ENCODE measurements at regions of chr11 and their contacts with region 1.

Region 1: GRCh38 chr11:96464700-96465307 is 75.0 kb downstream of the JRKL start:
- DNase-seq: peak; percentile 64
- H3K4me3 ChIP-seq: no peak overlapping the region
- H3K27ac ChIP-seq: no peak overlapping the region
- H3K4me1 ChIP-seq: peaks cover 3% of the 10 kb centered on the region
- H3K27me3 ChIP-seq: no peaks in the 10 kb centered on the region
- CTCF ChIP-seq: peak; percentile 45 to 52
- POLR2A ChIP-seq: no peak

Region 2: GRCh38 chr11:96481771-96482170 is 17.0 kb after region 1 on chr11:
- CTCF ChIA-PET with region 1: interaction called, 23 read pairs
- POLR2A ChIA-PET with region 1: no interaction called
- dilution Hi-C with region 1: no loop called
- intact Hi-C with region 1: no loop called
- DNase-seq: no peak
- H3K4me3 ChIP-seq: no peak overlapping the region
- H3K27ac ChIP-seq: no peak overlapping the region
- H3K4me1 ChIP-seq: no peaks in the 10 kb centered on the region
- H3K27me3 ChIP-seq: no peaks in the 10 kb centered on the region
- CTCF ChIP-seq: no peak
- POLR2A ChIP-seq: no peak

Region 3: DNA sequence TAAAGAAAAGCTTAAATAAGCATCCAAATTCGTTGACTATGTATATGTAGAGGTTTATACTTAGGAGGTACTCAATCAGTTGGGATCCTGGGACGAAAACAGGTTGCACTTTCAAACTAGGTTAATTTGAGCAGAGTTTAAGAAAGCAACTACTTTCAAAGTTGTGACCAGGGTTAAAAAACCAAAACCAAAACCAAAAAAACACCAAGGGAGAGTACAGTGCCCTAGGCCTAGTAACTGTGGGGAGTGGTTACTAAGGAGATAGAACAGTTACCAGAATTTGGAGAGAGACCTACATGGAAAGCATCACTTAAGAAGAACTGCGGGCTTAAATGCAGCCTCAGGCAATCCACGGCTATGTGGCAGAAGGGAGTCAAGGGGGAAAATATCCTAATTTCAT is 73.3 kb after region 1 on chr11:
- CTCF ChIA-PET with region 1: no interaction called
- POLR2A ChIA-PET with region 1: no interaction called
- dilution Hi-C with region 1: no loop called
- intact Hi-C with region 1: no loop called
- DNase-seq: no peak
- H3K4me3 ChIP-seq: no peak overlapping the region
- H3K27ac ChIP-seq: no peak overlapping the region
- H3K4me1 ChIP-seq: no peaks in the 10 kb centered on the region
- H3K27me3 ChIP-seq: peaks cover 0 to 1% of the 10 kb centered on the region in 2 experiments
- CTCF ChIP-seq: no peak
- POLR2A ChIP-seq: no peak

Region 4: GRCh38 chr11:96794152-96794551 is 329.3 kb after region 1 on chr11:
- CTCF ChIA-PET with region 1: interaction called, 22 read pairs
- POLR2A ChIA-PET with region 1: no interaction called
- dilution Hi-C with region 1: no loop called
- intact Hi-C with region 1: loop called (anchors 2 kb)
- DNase-seq: no peak
- H3K4me3 ChIP-seq: no peak overlapping the region
- H3K27ac ChIP-seq: no peak overlapping the region
- H3K4me1 ChIP-seq: no peaks in the 10 kb centered on the region
- H3K27me3 ChIP-seq: peaks cover 0 to 2% of the 10 kb centered on the region in 2 experiments
- CTCF ChIP-seq: no peak
- POLR2A ChIP-seq: no peak

Region 5: DNA sequence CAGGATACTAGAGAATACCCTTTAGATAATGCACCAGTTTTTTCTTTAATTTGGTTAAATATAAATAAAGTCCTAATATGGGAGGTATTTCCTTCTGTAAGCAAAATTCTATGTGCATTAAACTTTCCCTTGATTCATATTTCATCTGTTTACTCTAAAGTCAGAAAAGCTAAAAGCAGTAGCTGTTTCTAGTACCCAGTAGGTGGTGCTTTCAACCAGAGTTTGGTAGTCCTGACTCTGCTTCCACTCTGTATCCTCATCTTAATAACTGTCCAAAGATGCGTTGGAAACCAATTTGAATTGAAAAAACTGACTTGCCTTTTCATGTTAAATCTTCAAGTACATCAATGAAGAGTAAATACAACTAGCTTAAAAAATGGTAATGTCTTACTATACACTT is 990.2 kb after region 1 on chr11:
- CTCF ChIA-PET with region 1: interaction called, 17 read pairs
- POLR2A ChIA-PET with region 1: no interaction called
- dilution Hi-C with region 1: no loop called
- intact Hi-C with region 1: no loop called
- DNase-seq: peak; percentile 16
- H3K4me3 ChIP-seq: no peak overlapping the region
- H3K27ac ChIP-seq: no peak overlapping the region
- H3K4me1 ChIP-seq: no peaks in the 10 kb centered on the region
- H3K27me3 ChIP-seq: no peaks in the 10 kb centered on the region
- CTCF ChIP-seq: peak in 1 of 2 donors; percentile 16
- POLR2A ChIP-seq: no peak